ENCODE measurements at regions of chr11 and their contacts with region 1.

Region 1: DNA sequence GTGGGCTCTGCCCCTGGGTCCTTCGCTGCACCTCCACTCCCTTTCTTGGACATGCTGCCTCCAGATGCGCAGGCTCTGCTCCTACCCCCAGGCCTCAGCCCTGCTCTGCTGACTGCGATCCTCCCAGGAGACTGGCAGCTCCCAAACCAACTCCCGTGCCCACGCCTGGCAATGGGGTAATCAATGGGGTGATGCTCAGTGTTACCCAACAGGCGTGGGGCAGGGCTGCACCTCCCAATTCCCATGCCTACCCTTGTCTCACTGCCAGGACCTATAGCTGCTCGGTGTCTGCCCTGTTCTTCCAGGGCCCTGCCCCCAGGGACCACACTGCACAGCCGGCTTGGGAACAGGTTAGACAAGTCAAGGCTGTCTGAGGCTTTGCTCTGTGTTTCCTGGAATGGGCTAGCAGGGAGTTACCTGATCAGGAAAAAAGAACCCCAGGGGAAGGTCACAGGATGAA is at the start of gene ALDH3B2:
- DNase-seq: no peak
- H3K4me3 ChIP-seq: no peak within 1 kb of the TSS
- H3K27ac ChIP-seq: no peak within 1 kb of the TSS
- H3K4me1 ChIP-seq: no peaks in the 10 kb centered on the region
- H3K27me3 ChIP-seq: no peaks in the 10 kb centered on the region

Region 2: GRCh38 chr11:66421492-66422205 is 1252.8 kb before region 1 on chr11:
- CTCF ChIA-PET with region 1: no interaction called
- POLR2A ChIA-PET with region 1: no interaction called
- DNase-seq: peak; percentile 81 to 90 (median 85)
- H3K4me3 ChIP-seq: no peak overlapping the region
- H3K27ac ChIP-seq: no peak overlapping the region
- H3K4me1 ChIP-seq: peaks cover 0 to 2% (median 0%) of the 10 kb centered on the region in 4 experiments
- H3K27me3 ChIP-seq: peaks cover 0 to 46% (median 21%) of the 10 kb centered on the region in 5 experiments

Region 3: DNA sequence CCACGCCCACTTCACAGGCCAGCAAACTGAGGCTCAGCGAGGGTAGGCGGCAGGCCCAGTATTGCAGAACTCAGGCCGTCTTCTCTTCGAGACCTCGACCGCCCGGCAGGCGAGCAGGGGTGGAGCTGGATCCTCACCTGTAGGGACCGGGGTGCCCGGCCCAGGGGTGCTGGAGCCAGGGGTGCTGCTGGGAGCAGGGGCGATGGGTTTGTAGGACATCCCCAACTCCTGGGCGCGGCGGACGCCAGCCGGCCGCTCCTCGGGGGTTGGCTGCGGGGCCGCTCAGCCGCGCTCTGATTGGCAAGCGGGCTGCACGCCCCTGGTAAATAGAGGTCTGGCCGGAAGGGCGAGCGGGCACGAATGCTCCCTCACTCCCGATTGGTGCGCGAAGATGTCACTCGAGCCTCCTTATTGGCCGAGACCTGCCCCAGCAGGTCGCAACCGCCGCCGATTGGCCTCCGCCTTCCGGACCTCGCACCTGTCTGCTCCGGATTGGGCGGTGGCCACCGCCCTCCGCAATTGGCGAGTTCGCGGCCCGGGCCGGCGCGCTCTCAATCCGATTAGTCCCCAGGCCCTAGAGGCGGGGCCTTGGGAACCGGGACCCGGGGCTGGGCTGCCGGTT is 166.5 kb before region 1 on chr11 and contains the start of gene CDK2AP2:
- CTCF ChIA-PET with region 1: no interaction called
- POLR2A ChIA-PET with region 1: no interaction called
- DNase-seq: peak; percentile 98 to 100 (median 99)
- H3K4me3 ChIP-seq: peak within 1 kb of the TSS; percentile 70 to 94 (median 87)
- H3K27ac ChIP-seq: peak within 1 kb of the TSS; percentile 98 to 99
- H3K4me1 ChIP-seq: peaks cover 0 to 49% (median 47%) of the 10 kb centered on the region in 4 experiments
- H3K27me3 ChIP-seq: peaks cover 0 to 19% (median 2%) of the 10 kb centered on the region in 5 experiments

Region 4: GRCh38 chr11:67649634-67650510 is 24.6 kb before region 1 on chr11:
- CTCF ChIA-PET with region 1: no interaction called
- POLR2A ChIA-PET with region 1: no interaction called
- DNase-seq: no peak
- H3K4me3 ChIP-seq: peak overlapping the region in 5 of 7 experiments; percentile 3 to 77 (median 40)
- H3K27ac ChIP-seq: no peak overlapping the region
- H3K4me1 ChIP-seq: peaks cover 10 to 75% (median 64%) of the 10 kb centered on the region in 4 experiments
- H3K27me3 ChIP-seq: no peaks in the 10 kb centered on the region

Region 5: DNA sequence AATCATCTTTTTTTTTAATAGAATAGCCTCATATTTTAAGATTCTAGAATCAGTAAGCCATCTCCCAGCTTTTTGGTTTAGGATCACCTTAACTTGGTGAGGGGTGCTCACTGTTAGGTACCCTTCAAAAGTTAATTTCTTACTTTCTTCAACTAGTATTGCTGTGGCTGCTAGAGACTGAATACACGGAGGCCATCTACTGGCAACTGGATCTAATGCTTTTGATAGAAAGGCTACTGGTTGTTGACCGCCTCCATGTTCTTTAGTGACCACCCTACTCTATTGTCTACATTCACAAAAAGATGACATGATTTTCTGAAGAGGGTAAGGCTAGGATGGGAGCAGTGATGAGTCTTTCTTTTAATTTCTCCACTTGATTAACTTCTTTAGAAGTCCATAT is 16.7 kb after region 1 on chr11:
- CTCF ChIA-PET with region 1: interaction called, 11 read pairs
- POLR2A ChIA-PET with region 1: no interaction called
- DNase-seq: no peak
- H3K4me3 ChIP-seq: no peak overlapping the region
- H3K27ac ChIP-seq: no peak overlapping the region
- H3K4me1 ChIP-seq: peaks cover 12 to 20% (median 13%) of the 10 kb centered on the region in 4 experiments
- H3K27me3 ChIP-seq: no peaks in the 10 kb centered on the region

Measured in common myeloid progenitor, CD34-positive (primary cell).